Mammary epithelial cell (primary cell): ENCODE measurements at regions of chr1 and their contacts with region 1.

Region 1: DNA sequence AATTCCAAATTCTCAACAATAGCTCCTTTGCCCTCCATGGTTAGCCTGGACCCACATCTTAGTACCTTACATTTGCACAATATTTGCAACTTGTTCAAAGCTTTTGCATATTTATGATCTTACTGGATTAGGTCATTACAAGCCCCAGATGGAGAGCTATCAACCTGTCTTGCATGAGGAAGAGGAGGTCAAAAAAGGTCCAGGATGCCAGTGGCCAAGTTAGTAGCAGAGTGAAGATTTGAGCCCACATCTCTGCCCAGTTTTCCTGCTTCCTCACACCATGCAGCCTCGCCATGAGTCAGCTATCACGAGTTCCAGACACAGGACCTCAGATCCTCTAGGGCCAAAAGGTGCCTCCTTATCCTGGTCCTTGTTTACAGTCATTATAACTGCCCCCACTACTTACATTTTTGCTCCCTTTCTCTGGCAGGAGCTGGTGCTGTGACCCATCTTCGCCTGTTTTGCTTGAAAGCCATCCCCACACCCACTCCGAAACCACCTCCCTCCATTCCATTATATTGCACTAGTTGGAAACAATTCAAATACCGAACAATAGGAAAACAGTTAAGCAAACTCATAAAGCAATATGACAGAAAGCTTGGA is 5.0 kb upstream of the AHCYL1 start:
- DNase-seq: peak; percentile 60
- H3K4me3 ChIP-seq: no peak overlapping the region
- H3K27ac ChIP-seq: no peak overlapping the region
- H3K4me1 ChIP-seq: peaks cover 50% of the 10 kb centered on the region
- H3K27me3 ChIP-seq: no peaks in the 10 kb centered on the region
- CTCF ChIP-seq: no peak

Region 2: GRCh38 chr1:109718491-109718890 is 261.1 kb before region 1 on chr1:
- CTCF ChIA-PET with region 1: interaction called, 41 read pairs
- dilution Hi-C with region 1: no loop called
- in situ Hi-C with region 1: no loop called
- intact Hi-C with region 1: no loop called
- DNase-seq: peak; percentile 21
- H3K4me3 ChIP-seq: no peak overlapping the region
- H3K27ac ChIP-seq: no peak overlapping the region
- H3K4me1 ChIP-seq: peaks cover 18% of the 10 kb centered on the region
- H3K27me3 ChIP-seq: no peaks in the 10 kb centered on the region
- CTCF ChIP-seq: peak in 1 of 2 donors; percentile 21

Region 3: GRCh38 chr1:109790735-109791494 is 188.7 kb before region 1 on chr1:
- CTCF ChIA-PET with region 1: interaction called, 3 read pairs
- dilution Hi-C with region 1: loop called (anchors 5 kb)
- in situ Hi-C with region 1: no loop called
- intact Hi-C with region 1: no loop called
- DNase-seq: no peak
- H3K4me3 ChIP-seq: no peak overlapping the region
- H3K27ac ChIP-seq: no peak overlapping the region
- H3K4me1 ChIP-seq: peaks cover 34% of the 10 kb centered on the region
- H3K27me3 ChIP-seq: no peaks in the 10 kb centered on the region
- CTCF ChIP-seq: no peak

Region 4: GRCh38 chr1:109892561-109893368 is 86.8 kb before region 1 on chr1:
- CTCF ChIA-PET with region 1: no interaction called
- dilution Hi-C with region 1: no loop called
- in situ Hi-C with region 1: no loop called
- intact Hi-C with region 1: no loop called
- DNase-seq: peak; percentile 97
- H3K4me3 ChIP-seq: no peak overlapping the region
- H3K27ac ChIP-seq: peak overlapping the region; percentile 34
- H3K4me1 ChIP-seq: peaks cover 21% of the 10 kb centered on the region
- H3K27me3 ChIP-seq: no peaks in the 10 kb centered on the region
- CTCF ChIP-seq: no peak

Region 5: GRCh38 chr1:109910123-109910962 is 69.2 kb before region 1 on chr1 and contains the start of gene CSF1:
- CTCF ChIA-PET with region 1: no interaction called
- dilution Hi-C with region 1: no loop called
- in situ Hi-C with region 1: loop called in 1 of 2 experiments (anchors 10 kb)
- intact Hi-C with region 1: loop called (anchors 2 kb)
- DNase-seq: peak; percentile 64
- H3K4me3 ChIP-seq: peak within 1 kb of the TSS; percentile 58 to 81 (median 67)
- H3K27ac ChIP-seq: peak within 1 kb of the TSS; percentile 29
- H3K4me1 ChIP-seq: peaks cover 21% of the 10 kb centered on the region
- H3K27me3 ChIP-seq: no peaks in the 10 kb centered on the region
- CTCF ChIP-seq: no peak
- total RNA-seq, gene CSF1: 5.6 to 29.5 TPM

Region 6: DNA sequence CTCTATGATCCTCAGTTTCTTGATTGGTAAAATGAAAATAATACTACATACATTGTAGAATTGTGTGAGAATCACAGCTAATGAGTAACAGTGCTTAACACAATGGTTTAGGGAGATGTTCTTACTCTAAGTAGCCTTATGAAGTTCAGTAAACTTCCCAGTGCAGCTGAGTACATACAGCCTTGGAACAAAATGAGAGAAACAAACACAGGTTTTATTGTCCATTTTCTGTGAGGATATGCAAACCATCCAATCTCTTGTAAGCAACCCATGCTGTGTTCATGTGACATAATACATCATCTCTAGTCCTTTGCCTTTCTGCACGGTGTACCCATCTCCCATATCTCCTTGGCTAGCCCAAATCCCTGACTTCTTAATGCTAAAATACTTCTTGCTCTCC is 40.2 kb after region 1 on chr1:
- CTCF ChIA-PET with region 1: no interaction called
- dilution Hi-C with region 1: loop called (anchors 5 kb)
- in situ Hi-C with region 1: no loop called
- intact Hi-C with region 1: no loop called
- DNase-seq: no peak
- H3K4me3 ChIP-seq: no peak overlapping the region
- H3K27ac ChIP-seq: no peak overlapping the region
- H3K4me1 ChIP-seq: no peaks in the 10 kb centered on the region
- H3K27me3 ChIP-seq: no peaks in the 10 kb centered on the region
- CTCF ChIP-seq: no peak